Calu3 (cell line): ENCODE measurements at regions of chr10 and their contacts with region 1.

Region 1: DNA sequence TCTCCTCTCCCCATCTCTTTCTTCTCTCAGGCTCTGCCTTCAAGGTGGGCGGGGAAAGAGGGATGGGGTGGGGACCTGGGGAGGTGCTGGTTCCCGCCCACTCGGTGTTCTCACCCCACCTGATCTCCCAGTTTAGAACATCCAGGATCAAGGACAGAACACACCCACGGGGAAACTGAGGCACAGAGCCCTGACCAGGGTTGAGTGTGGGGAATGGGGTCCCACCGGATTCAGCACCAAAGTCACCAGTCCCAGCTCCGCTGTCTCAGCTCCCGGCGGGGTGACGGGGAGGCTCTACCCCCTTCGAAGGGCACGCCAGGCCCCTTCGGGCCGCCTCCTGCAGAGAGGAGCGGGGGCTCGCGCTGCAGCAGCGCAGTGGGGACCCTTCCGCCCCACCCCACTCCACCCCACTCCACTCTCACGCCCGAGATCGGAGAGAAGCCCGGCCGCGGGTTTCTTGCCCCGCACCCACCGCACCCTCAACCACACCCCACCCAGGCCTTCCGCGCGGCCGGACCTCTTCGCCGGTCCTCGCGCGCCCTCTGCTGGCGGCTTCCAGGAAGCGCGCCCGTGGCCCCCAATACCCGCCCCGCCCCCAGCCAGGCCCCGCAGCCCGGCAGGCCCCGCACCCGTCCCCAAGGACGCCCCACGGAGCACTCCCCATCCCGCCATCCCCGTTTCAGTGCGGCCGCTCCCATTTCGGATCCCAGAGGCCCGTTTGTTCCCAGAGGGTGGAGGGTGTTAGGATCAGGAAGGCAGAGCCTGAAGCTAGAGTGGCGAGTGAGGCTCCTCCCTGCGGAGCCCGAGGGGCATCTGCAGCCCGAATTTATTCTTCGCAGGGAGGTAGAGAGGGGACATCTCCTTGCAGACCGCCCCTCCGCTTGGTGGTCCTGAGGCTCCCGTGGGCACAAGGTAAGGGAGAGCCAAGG is 18.0 kb downstream of the POLL start:
- DNase-seq: peak; percentile 76
- H3K4me3 Mint-ChIP-seq: peak overlapping the region; percentile 75
- H3K27ac Mint-ChIP-seq: no peak overlapping the region
- H3K4me1 Mint-ChIP-seq: no peaks in the 10 kb centered on the region
- H3K27me3 Mint-ChIP-seq: peaks cover 63% of the 10 kb centered on the region
- CTCF ChIP-seq: peak; percentile 85

Region 2: GRCh38 chr10:101161494-101162299 is 408.4 kb before region 1 on chr10:
- CTCF ChIA-PET with region 1: no interaction called
- intact Hi-C with region 1: loop called (anchors 5 kb)
- DNase-seq: peak; percentile 58
- H3K4me3 Mint-ChIP-seq: peak overlapping the region; percentile 28
- H3K27ac Mint-ChIP-seq: no peak overlapping the region
- H3K4me1 Mint-ChIP-seq: peaks cover 16% of the 10 kb centered on the region
- H3K27me3 Mint-ChIP-seq: peaks cover 90% of the 10 kb centered on the region
- CTCF ChIP-seq: peak; percentile 81